ENCODE measurements at regions of chr13 and their contacts with region 1.

Region 1: GRCh38 chr13:21176220-21176982 is at the starts of genes MRPL57 and SKA3:
- DNase-seq: peak; percentile 84 to 93
- H3K4me3 ChIP-seq: peak within 1 kb of the TSS; percentile 73 to 88
- H3K27ac ChIP-seq: peak within 1 kb of the TSS; percentile 87 to 94
- H3K4me1 ChIP-seq: peaks cover 0 to 19% (median 14%) of the 10 kb centered on the region in 4 donors
- H3K27me3 ChIP-seq: no peaks in the 10 kb centered on the region
- CTCF ChIP-seq: peak; percentile 15 to 34

Region 2: DNA sequence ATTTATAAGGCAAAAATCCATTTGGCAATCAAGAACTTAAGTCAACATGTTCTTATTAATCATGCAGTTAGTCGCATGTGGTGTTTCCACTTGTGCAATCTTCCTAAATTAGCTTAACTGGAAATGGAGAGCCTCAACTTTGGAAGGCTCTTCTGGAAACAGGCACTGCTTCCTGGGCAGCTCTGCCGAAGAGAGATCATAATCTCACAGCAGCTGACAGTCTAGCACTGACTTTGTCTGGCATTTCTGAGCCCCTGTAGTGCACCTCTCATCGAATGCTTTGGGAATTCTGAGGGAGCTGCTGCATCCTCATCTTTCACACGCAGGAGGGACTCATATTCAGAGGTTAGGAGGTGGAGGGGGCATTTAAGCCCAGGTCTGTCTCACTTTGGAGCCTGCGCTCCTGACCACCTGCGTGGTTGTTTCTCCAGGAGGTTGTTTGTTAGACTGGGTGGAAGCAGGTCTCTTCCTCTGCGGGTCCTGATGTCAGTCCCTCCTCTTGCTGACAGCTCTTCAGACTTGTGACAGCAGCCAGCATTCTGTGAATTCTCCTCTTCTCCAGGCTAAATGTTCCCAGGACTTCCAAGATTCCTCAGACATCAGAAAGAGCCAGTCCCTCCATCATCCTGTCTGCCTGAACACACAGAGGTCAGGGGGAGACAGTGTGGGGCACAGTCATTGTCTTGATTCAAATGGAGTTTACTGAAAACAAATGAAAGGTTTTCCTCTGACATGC is 843.9 kb before region 1 on chr13:
- intact Hi-C with region 1: no loop called
- DNase-seq: peak in 1 of 2 donors; percentile 42
- H3K4me3 ChIP-seq: no peak overlapping the region
- H3K27ac ChIP-seq: no peak overlapping the region
- H3K4me1 ChIP-seq: no peaks in the 10 kb centered on the region
- H3K27me3 ChIP-seq: no peaks in the 10 kb centered on the region
- CTCF ChIP-seq: no peak

Region 3: DNA sequence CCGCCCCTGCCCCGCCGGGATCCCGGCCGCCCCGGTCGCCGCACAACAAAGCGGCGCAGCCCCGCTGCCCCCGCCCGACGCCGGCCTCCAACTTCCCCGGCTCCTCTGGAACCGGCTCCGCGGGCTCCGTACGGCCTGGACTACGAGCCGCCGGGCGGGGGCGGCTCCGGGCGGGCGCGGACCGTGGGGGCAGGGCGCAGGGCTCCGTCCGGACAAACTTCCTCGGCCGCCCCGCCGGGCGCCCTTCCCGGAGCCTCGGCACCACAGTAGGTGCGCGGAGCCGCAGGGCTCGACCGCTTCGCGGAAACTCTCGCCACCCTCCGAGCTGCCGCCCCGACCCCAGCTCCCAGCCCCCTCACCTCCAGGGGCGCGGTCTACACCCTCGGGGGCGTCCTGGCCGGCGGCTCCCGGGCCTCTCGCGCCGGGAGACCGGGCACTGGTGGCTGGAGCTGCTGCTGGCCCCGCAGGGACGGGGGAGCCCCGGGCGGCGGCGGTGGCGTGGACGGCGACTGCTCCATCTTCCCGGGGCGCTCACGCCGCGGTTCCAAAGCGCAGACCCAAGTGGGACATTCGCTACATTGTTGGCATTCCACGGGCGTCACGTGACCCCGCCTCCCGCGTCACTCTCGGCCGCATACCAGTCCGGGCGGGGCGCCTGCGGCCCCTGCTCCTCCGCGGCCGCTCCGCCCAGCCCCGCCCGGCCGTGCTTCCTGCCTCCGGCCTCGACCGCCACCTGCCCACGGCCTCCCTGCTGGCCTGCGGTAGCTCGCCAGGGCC is 115.2 kb before region 1 on chr13 and contains the start of gene LATS2:
- intact Hi-C with region 1: loop called (anchors 10 kb)
- DNase-seq: peak; percentile 97 to 98
- H3K4me3 ChIP-seq: peak within 1 kb of the TSS; percentile 90 to 97
- H3K27ac ChIP-seq: peak within 1 kb of the TSS; percentile 97 to 100
- H3K4me1 ChIP-seq: peaks cover 0 to 58% (median 33%) of the 10 kb centered on the region in 4 donors
- H3K27me3 ChIP-seq: no peaks in the 10 kb centered on the region
- CTCF ChIP-seq: peak; percentile 34 to 35

Region 4: DNA sequence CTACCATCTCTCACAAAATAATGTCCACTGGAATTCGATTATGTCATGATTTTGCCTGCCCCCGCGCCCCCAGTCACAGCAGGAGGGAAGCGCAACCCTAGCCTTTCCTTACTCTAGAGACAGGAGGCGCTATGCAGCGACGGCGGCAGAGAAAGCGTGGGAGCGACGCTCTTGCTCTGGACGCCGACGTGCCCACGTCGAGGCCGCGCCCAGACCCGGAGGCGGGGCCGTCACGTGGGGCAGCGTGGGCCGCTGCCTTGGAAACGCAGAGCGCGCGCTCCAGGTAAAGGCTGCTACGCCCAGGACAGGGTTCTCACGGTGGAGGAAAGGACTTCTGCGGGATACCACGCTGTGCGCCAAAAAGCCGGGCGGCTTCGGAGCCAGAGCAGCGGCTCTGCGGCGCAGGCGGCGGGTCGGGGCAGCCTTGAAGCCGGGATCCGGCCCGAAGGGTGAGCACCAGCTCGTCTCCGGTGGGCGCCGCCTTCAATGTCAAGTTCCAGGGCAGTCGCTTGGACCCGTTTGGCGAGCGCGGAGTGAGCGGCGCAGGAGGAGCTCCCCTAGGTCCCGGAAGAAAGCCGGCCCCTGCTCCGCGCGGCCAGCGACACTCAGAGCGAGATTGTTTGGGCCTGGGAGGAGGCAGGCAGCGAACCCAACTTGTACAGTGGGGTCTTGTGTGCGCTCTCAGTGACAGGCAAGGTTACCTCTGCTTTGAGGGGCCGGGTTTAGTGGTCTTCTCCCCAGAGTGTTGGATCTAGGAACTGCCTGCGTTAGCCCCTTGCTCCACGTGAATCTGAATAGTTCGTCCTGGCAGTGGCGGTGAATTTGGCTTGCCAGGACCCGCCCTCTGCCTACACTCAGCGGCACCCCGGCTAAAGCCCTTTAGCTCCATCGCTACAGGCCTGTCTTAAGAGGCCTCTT is 121.8 kb after region 1 on chr13:
- intact Hi-C with region 1: loop called (anchors 10 kb)
- DNase-seq: peak; percentile 80 to 85
- H3K4me3 ChIP-seq: peak overlapping the region; percentile 76 to 89
- H3K27ac ChIP-seq: peak overlapping the region; percentile 78 to 79
- H3K4me1 ChIP-seq: peaks cover 0 to 21% (median 6%) of the 10 kb centered on the region in 4 donors
- H3K27me3 ChIP-seq: no peaks in the 10 kb centered on the region
- CTCF ChIP-seq: peak; percentile 80 to 88

Region 5: DNA sequence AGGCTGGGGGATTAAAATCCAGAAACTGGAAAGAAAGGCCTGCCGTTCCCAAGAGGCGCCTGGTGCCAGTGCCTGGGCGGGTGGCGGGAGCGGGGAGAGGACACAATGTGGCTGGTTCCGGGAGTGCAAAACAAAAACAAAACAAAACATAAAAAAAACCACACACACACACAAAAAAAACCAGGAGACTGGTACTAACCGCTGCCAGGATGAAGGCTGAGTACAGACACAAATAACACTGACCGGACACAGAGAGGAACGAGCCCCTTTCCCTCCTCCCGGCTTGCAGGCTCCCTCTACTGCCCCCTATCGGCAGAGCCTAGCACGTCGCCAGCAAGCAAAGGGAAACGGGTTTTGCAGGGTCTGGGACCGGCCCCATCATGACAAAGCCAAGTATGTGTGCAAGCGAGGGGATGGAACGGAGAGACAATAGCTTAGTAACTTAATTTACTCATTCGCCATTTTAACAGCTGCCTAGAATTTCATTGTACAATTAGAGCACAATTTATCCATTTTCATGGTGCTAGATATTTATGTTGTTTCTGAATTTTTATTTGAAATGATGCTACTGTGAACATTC is 300.6 kb after region 1 on chr13:
- intact Hi-C with region 1: loop called (anchors 10 kb)
- DNase-seq: peak; percentile 74 to 82
- H3K4me3 ChIP-seq: peak overlapping the region; percentile 40 to 46
- H3K27ac ChIP-seq: no peak overlapping the region
- H3K4me1 ChIP-seq: peaks cover 0 to 15% (median 7%) of the 10 kb centered on the region in 4 donors
- H3K27me3 ChIP-seq: no peaks in the 10 kb centered on the region
- CTCF ChIP-seq: peak; percentile 79 to 88

Measured in tibial artery (tissue), 4 donors.